Posterior vena cava (tissue), 2 donors: ENCODE measurements at regions of chr18 and their contacts with region 1.

Region 1: GRCh38 chr18:52948868-52949444 is 609.0 kb downstream of the DCC start:
- DNase-seq: no peak

Region 2: DNA sequence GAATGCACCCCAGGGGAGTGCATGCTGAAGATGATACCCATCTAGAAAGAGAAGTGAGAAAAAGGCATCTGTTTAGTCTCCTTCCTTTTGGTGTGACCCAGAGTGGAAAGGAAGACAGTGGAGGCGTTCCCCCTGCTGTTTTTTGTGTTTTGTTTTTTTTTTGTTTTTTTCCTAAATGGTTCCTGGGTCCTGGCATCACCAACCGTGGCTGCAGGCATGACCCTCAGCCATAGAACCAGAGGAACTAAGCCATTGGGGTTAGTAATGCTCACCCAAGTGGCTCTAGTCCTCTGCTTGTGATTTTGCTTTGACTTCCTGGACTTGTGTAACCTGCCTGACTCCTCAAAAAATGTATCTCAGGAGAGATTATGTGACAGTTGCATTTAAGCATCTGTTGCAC is 157.6 kb before region 1 on chr18:
- intact Hi-C with region 1: no loop called
- DNase-seq: no peak

Region 3: DNA sequence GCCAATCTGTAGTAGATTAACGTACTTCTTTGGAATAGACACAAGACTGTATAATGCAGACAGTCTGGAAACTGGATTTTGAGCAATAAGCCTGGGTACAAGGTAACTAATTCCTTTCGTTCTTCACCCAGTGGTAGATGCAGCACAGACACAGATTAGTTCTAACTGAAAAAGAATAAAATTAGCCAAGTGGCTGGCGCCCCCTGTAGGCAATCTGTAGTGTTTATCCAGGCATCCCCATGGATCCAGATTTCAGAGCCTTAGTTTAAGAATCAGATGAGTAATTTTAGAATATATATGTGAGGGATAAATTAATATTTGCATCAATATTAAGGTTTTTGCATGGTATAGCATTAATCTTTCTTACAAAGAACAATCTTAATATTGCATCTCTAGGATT is 45.1 kb before region 1 on chr18:
- intact Hi-C with region 1: no loop called
- DNase-seq: no peak

Region 4: DNA sequence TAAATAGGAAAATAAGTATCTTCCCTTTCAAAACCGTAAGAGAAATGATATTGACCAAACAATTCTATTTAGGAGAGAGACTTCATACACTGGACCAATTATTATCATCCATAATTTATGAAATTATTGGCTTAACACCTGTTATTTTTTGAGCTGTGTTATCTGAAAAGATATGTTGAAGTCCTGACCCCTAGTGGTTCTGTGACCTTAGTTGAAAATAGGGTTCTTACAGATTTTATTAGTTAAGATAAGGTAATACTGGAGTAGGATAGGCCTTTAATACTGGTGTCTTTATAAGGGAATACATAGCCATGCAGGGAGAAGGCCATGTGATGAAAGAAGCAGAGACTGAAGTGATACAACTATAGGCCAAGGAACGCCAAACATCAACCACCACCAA is 50.7 kb after region 1 on chr18:
- intact Hi-C with region 1: loop called in 1 of 2 experiments (anchors 1 kb)
- DNase-seq: no peak